Lower leg skin (tissue), 4 donors: ENCODE measurements at regions of chr11 and their contacts with region 1.

Region 1: GRCh38 chr11:44286268-44286880 is 23.6 kb downstream of the ALX4 start:
- DNase-seq: peak in 1 of 2 donors; percentile 29
- H3K4me3 ChIP-seq: no peak overlapping the region
- CTCF ChIP-seq: peak in 1 of 3 donors; percentile 86
- POLR2A ChIP-seq: no peak

Region 2: DNA sequence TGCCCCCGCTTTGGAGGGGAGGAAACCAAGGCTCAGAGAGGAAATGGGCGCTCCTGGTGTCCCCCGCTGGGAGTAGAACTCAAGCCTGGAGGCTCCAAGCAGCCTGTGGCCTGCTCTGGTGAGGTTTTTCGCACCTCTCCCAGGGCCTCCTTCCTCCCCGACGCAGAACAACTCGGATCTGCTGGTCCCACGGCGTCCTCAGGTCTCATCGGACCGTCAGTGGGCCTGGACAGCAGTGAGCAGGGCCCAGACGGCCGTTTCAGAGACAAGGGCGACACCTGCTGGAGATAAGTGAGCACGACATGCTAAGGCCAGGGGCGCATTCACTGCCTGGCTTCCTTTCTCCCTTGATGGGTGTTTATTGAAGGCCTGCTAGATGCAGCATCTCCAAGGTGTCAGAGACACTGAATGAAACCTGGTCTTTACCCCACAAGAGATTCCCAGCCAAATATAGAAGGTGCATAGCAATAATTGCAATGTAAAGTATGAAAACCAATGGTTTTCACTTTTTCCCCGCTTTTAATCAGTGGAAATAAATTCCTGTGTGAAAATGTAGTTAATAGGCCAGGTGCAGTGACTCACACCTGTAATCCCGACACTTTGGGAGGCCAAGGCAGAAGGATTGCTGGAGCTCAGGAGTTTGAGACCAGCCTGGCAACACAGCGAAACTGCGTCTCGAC is 252.1 kb after region 1 on chr11:
- intact Hi-C with region 1: loop called (anchors 5 kb)
- DNase-seq: peak; percentile 61 to 95
- H3K4me3 ChIP-seq: no peak overlapping the region
- CTCF ChIP-seq: peak in 1 of 3 donors; percentile 94
- POLR2A ChIP-seq: no peak

Region 3: DNA sequence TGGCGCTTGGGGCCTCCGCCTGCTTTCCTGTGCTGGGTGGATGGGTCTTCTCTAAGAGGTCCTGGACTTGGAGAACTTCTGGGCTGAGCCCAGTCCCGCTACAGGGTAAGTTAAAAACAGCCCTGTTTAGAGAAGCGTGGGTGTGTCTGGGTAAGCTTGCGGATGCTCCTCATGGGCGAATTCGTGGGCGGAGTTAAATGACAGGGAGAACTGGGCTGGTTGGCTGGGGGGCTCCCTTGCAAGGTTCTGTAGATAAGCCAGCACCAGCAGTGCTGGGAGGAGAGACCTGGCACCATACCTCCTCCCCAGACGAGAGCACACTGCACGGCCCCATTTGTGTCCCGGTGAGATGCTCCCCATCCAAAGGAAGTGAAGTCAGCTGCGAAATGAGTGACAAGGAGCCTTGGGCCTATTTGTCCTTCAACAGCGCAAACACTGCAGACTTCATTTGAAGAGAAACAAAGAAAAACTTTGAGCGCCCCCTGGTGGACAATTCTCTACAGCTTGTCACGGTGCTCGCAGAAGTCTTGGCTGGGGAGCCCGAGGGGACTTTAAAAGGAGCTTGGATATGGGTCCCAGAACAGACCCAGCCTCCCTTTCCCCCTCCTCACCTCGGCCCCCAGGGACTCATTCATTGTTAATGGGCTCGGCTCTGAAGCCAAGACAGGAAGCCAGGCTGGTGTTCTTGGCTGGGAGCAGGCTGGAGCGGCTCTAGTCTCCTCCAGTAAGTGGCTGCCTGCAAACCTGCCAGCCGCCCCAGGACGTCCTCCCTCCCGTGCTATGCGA is 624.8 kb after region 1 on chr11:
- intact Hi-C with region 1: loop called (anchors 10 kb)
- DNase-seq: peak; percentile 88 to 95
- H3K4me3 ChIP-seq: no peak overlapping the region
- CTCF ChIP-seq: peak in 1 of 3 donors; percentile 72
- POLR2A ChIP-seq: no peak